Activated naive CD4-positive, alpha-beta T cell treated with anti-CD3 and anti-CD28 coated beads for 36 hours (primary cell): ENCODE measurements at regions of chr7 and their contacts with region 1.

Region 1: GRCh38 chr7:35624299-35625186 is 70.4 kb downstream of the HERPUD2 start:
- DNase-seq: peak; percentile 51
- H3K4me3 Mint-ChIP-seq: no peak overlapping the region
- H3K27ac Mint-ChIP-seq: no peak overlapping the region
- H3K4me1 Mint-ChIP-seq: peaks cover 2% of the 10 kb centered on the region
- H3K27me3 Mint-ChIP-seq: no peaks in the 10 kb centered on the region

Region 2: DNA sequence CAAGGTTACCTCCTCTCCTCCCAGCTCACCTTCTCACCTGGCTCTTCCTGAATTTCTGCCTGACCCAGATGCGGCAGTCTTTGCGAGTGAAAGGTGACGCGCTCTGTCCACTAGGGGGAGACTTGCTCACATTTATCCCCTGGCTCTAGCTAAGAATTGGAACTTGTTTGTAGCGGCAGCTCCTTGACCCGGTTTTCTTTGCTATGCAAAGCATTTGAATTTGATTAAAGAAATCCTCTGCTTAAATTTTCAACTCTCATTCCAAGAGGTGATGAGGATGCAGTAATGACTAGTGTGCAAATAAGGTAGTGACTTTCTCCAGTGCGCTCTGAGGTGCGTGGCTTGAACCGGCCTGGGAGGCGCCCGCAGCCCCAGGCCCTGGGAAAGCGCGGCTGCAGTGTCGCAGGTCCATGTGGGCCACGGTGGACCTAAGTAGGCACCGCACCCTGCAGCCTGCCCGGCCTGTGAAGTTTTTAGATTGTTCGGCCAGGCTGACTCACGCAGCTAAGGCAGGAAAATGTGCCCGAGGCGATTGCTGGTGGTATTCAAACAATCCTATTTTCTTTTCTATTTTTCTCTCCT is 1303.5 kb before region 1 on chr7:
- CTCF ChIA-PET with region 1: no interaction called
- intact Hi-C with region 1: loop called (anchors 10 kb)
- DNase-seq: peak; percentile 61
- H3K4me3 Mint-ChIP-seq: no peak overlapping the region
- H3K27ac Mint-ChIP-seq: no peak overlapping the region
- H3K4me1 Mint-ChIP-seq: peaks cover 3% of the 10 kb centered on the region
- H3K27me3 Mint-ChIP-seq: peaks cover 29% of the 10 kb centered on the region

Region 3: DNA sequence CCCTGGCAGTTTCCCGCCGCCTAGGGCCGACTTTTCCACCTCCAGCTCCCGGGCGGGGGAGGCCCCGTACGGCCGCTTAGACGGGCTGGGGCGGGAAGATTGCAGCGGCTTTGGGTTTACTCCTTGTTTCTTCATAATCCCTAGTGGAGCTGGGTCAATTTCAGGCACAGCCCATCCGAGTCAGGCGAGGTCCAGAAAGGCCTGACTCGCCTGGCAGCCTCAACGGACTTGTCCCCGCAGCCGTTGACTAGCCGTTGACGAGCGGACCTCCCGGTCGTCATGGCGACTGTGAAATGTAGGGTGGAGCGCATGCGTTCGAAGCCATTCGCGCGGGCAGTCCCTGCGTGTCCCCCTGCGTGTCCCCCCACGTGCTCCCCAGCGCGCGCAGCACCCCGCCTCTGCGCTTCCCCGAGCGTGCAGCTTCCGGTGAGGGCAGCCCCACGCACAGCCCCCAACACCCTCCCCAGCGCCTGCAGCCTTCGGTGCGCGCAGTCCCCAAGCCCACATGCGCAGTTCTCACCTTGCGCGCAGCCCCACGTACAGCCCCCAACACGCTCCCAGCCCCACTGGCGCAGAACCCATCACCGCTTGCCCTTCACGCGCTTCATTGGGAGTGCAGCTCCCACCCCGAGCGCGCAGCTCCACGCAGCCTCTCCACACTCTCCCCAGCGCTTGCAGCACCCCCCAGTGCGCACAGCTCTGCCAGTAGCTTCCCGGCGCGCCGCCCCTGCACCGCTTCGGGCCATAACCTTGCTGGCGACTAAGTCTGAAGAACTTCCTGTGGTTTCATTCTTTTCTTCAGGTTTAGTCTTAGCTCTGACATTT is 438.4 kb before region 1 on chr7:
- CTCF ChIA-PET with region 1: no interaction called
- intact Hi-C with region 1: loop called (anchors 2 kb)
- DNase-seq: peak; percentile 12
- H3K4me3 Mint-ChIP-seq: peak overlapping the region; percentile 71
- H3K27ac Mint-ChIP-seq: no peak overlapping the region
- H3K4me1 Mint-ChIP-seq: peaks cover 10% of the 10 kb centered on the region
- H3K27me3 Mint-ChIP-seq: peaks cover 25% of the 10 kb centered on the region

Region 4: DNA sequence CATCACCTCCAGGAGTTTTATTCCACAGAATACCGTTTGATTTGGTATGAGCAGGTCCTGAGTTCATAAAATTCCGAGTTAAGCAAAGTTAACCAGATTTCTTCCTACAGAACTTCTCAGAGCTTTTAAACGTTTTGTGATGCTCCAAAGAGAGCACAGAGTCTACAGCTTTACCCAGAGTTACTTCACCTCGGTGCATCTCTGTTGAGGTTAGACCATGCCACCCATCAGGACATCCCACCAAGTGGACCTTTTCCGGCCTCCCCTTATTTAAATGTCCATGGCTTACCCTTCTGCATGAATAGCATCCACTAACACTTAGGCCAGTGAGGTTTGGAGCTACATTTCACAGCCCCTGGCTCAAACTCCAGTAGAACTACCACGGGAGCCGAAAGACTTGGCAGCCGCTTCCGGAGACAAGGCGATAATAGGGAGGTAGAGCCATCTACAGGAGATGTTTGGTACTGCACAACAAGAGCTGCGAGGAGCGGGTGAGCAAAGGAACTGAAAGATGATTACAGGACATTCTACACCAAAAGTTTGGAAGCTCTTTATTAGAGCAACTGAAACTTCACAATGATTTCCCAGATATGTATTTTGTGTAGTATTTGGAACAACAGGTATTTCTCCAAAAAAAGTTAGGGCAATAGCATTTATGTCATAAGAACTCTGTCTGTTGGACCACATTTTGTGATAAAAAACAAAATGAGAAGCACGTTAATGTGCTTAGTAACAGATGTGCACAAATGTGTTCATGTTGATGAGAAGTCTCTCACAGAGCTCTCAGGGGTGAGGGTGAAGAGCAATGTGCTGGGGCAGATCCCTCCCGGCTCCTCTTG is 104.4 kb before region 1 on chr7:
- CTCF ChIA-PET with region 1: interaction called, 5 read pairs
- intact Hi-C with region 1: loop called (anchors 1 kb)
- DNase-seq: peak; percentile 73
- H3K4me3 Mint-ChIP-seq: no peak overlapping the region
- H3K27ac Mint-ChIP-seq: no peak overlapping the region
- H3K4me1 Mint-ChIP-seq: no peaks in the 10 kb centered on the region
- H3K27me3 Mint-ChIP-seq: peaks cover 4% of the 10 kb centered on the region

Region 5: DNA sequence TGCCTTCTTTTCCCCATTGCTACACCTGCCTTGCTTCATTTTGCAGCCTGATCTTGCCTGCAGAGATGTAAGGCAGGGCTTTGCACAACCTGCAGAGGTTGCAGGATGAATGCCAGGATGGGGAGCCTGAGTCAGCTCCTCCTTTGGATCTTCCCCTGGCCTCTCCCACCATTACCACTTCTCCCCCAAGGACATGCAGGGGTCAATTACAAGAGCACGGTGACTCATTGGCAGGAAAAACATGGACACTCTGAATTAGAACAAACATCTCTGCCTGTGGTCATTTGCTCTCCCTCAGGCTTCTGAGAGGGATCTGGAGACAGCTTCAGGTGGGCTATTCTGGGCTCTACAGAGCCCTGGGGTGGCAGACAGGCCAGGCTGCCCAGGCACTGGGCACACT is 18.8 kb before region 1 on chr7:
- CTCF ChIA-PET with region 1: interaction called, 10 read pairs
- intact Hi-C with region 1: no loop called
- DNase-seq: no peak
- H3K4me3 Mint-ChIP-seq: no peak overlapping the region
- H3K27ac Mint-ChIP-seq: no peak overlapping the region
- H3K4me1 Mint-ChIP-seq: no peaks in the 10 kb centered on the region
- H3K27me3 Mint-ChIP-seq: no peaks in the 10 kb centered on the region